Activated B cell treated with CpG ODN at 0.5 μM for 24 hours (primary cell): ENCODE measurements at regions of chr1 and their contacts with region 1.

Region 1: GRCh38 chr1:223712194-223712849 is at the start of gene CAPN2:
- DNase-seq: peak; percentile 67
- ATAC-seq: peak; percentile 74
- H3K4me3 Mint-ChIP-seq: peak within 1 kb of the TSS; percentile 86
- H3K27ac Mint-ChIP-seq: peak within 1 kb of the TSS; percentile 72
- H3K4me1 Mint-ChIP-seq: peaks cover 49% of the 10 kb centered on the region
- H3K27me3 Mint-ChIP-seq: no peaks in the 10 kb centered on the region
- CTCF ChIP-seq: no peak
- total RNA-seq, gene CAPN2: 50.7 and 62.6 TPM in 2 replicates

Region 2: DNA sequence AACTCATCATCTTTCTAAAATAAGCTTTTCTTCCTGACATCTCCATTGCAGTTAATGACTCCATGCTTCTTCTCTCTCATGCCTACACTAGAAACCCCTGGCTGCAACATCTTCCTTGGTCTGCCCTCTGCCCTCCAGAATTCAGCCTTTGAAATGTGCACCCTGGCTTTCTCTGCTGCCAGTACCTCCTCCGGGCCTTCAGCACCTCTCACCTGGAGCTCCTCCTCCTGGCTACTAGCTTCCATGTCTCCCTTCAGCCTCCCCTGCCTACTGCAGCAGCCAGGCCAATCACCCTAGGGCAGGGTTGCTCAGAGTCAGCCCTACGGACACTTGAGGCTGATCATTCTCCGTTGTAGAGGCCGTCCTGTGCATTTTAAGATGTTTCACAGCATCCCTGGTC is 366.6 kb before region 1 on chr1:
- CTCF ChIA-PET with region 1: no interaction called
- POLR2A ChIA-PET with region 1: no interaction called
- intact Hi-C with region 1: no loop called
- DNase-seq: no peak
- ATAC-seq: no peak
- H3K4me3 Mint-ChIP-seq: no peak overlapping the region
- H3K27ac Mint-ChIP-seq: no peak overlapping the region
- H3K4me1 Mint-ChIP-seq: no peaks in the 10 kb centered on the region
- H3K27me3 Mint-ChIP-seq: peaks cover 2% of the 10 kb centered on the region
- CTCF ChIP-seq: no peak

Region 3: DNA sequence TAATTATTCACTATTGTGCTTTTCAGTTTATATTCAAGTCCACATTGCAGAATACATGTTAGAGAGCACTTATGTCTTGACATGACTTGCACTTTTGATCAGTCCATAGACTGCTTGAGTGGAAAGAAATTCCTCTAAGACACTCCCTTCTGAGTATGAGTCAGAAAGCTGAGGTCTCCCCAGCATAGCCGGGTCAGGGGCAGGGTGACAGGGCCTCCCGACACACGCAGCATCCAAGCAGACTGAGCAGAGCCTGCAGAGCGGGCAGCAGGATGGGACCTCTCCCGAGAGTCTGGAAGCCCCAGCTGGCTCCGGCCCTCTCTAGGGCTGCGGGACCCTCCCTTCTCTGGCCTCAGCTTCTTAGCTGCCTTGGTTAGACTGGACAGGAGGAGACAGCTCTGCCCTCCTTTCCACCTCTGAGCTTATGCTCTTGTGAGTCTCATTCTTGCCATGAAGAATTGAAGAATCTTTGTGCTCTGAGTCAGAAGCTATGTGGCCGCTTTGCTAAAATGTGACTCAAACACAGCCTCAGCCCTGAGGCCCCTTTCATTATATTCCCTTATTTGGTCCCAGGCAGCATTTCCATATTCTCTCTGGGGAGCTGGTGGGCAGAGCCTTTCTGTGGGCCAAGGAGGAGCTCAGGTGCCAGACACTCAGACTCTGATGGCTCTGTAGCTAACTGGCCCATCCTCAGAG is 11.2 kb before region 1 on chr1:
- CTCF ChIA-PET with region 1: interaction called, 14 read pairs
- POLR2A ChIA-PET with region 1: interaction called, 3 read pairs
- intact Hi-C with region 1: loop called (anchors 1 kb)
- DNase-seq: no peak
- ATAC-seq: no peak
- H3K4me3 Mint-ChIP-seq: no peak overlapping the region
- H3K27ac Mint-ChIP-seq: no peak overlapping the region
- H3K4me1 Mint-ChIP-seq: peaks cover 9% of the 10 kb centered on the region
- H3K27me3 Mint-ChIP-seq: peaks cover 13% of the 10 kb centered on the region
- CTCF ChIP-seq: no peak

Region 4: DNA sequence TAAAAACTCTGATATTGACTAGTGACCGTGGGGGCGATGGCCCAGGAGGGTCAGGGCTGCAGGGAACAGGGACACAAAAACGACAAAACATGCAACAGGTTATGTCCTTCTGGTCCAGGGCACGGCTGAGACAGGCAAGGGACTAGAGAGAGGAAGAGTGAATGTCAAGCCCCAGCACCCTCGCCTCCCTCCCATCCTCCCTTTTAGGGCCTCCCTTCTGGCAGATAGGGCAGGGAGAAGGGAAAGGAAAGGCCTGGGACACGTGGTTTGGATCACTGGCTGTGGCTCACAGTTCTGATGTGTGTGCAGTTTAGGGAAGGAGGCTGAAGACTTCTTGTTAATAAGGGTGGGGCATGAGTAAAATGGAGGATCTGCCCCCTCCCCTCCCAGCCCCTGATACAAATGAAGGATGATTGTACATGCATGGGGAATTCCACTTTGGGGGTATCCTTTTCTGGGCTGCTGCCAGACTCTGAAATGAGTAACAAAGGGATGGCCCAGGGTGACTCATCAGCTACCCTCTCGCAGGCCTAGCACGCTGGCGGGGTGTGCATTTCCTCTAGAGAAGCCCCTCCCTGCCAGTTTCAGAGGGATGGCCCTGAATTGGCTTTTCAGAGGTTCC is 14.2 kb after region 1 on chr1:
- CTCF ChIA-PET with region 1: interaction called, 10 read pairs
- POLR2A ChIA-PET with region 1: interaction called, 10 read pairs
- intact Hi-C with region 1: loop called (anchors 1 kb)
- DNase-seq: peak; percentile 45
- ATAC-seq: peak; percentile 97
- H3K4me3 Mint-ChIP-seq: peak overlapping the region; percentile 39
- H3K27ac Mint-ChIP-seq: peak overlapping the region; percentile 78
- H3K4me1 Mint-ChIP-seq: peaks cover 40% of the 10 kb centered on the region
- H3K27me3 Mint-ChIP-seq: no peaks in the 10 kb centered on the region
- CTCF ChIP-seq: no peak